ENCODE measurements at regions of chr5 and their contacts with region 1.

Region 1: GRCh38 chr5:101977729-101978345 is 318.2 kb downstream of the SLCO4C1 start:
- DNase-seq: peak; percentile 54
- H3K4me3 ChIP-seq: no peak overlapping the region; a peak in 1 of 4 replicates
- H3K27ac ChIP-seq: no peak overlapping the region
- H3K4me1 ChIP-seq: no peaks in the 10 kb centered on the region
- H3K27me3 ChIP-seq: no peaks in the 10 kb centered on the region
- CTCF ChIP-seq: peak; percentile 84
- EP300 ChIP-seq: no peak
- RAD21 ChIP-seq: peak; percentile 82

Region 2: GRCh38 chr5:101590384-101590783 is 387.5 kb before region 1 on chr5:
- CTCF ChIA-PET with region 1: no interaction called
- POLR2A ChIA-PET with region 1: no interaction called
- DNase-seq: peak; percentile 7
- H3K4me3 ChIP-seq: no peak overlapping the region
- H3K27ac ChIP-seq: no peak overlapping the region
- H3K4me1 ChIP-seq: no peaks in the 10 kb centered on the region
- H3K27me3 ChIP-seq: no peaks in the 10 kb centered on the region
- CTCF ChIP-seq: no peak; the same call in 1 of the 2 replicates
- EP300 ChIP-seq: no peak
- RAD21 ChIP-seq: peak; percentile 43

Region 3: DNA sequence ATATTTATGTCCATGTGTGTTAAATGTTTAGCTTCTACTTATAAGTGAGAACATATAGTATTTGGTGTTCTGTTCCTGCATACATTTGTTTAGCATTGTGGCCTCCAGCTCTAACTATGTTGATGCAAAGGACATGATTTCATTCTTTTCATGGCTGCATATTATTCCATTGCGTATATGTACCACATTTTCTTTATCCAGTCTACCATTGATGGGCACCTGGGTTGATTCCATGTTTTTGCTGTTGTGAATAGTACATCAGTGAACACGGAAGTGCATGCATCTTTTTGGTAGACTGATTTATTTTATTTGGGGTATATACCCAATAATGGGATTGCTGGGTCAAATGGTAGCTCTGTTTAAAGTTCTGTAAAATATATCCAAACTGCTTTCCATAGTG is 40.8 kb before region 1 on chr5:
- CTCF ChIA-PET with region 1: interaction called, 37 read pairs
- POLR2A ChIA-PET with region 1: no interaction called
- DNase-seq: no peak
- H3K4me3 ChIP-seq: no peak overlapping the region
- H3K27ac ChIP-seq: no peak overlapping the region
- H3K4me1 ChIP-seq: no peaks in the 10 kb centered on the region
- H3K27me3 ChIP-seq: no peaks in the 10 kb centered on the region
- CTCF ChIP-seq: no peak
- EP300 ChIP-seq: no peak
- RAD21 ChIP-seq: no peak

Region 4: DNA sequence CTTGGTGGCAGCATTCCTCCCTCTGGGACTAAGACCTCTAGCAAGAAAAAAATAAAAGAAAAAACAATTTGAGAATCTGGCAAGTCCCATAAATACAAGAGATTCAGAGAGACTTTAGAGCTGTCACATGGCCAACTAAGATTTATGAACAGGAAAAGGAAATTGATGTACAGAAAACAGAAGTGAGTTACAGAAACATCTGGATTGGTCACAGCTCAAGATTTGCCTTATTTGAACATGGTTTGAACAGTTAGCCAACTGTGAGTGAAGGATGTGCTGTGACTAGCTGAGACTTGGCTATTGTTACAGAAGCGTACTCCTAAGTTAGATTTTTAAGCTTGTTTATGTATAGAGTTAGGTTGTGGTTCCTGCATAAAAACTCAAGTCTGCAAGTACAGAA is 21.9 kb before region 1 on chr5:
- CTCF ChIA-PET with region 1: interaction called, 10 read pairs
- POLR2A ChIA-PET with region 1: no interaction called
- DNase-seq: no peak
- H3K4me3 ChIP-seq: no peak overlapping the region
- H3K27ac ChIP-seq: no peak overlapping the region
- H3K4me1 ChIP-seq: no peaks in the 10 kb centered on the region
- H3K27me3 ChIP-seq: no peaks in the 10 kb centered on the region
- CTCF ChIP-seq: no peak
- EP300 ChIP-seq: no peak
- RAD21 ChIP-seq: no peak